CD4-positive, alpha-beta memory T cell (primary cell): ENCODE measurements at regions of chr5 and their contacts with region 1.

Region 1: GRCh38 chr5:14871210-14872069 is at the start of gene ANKH:
- DNase-seq: peak; percentile 77 to 89 (median 87)
- H3K4me3 ChIP-seq: peak within 1 kb of the TSS; percentile 74 to 76
- H3K4me3 Mint-ChIP-seq: peak within 1 kb of the TSS; percentile 94 to 99 (median 98)
- H3K27ac ChIP-seq: peak within 1 kb of the TSS; percentile 67
- H3K27ac Mint-ChIP-seq: peak within 1 kb of the TSS; percentile 96 to 98 (median 97)
- H3K4me1 ChIP-seq: peaks cover 22% of the 10 kb centered on the region
- H3K4me1 Mint-ChIP-seq: peaks cover 29 to 46% (median 33%) of the 10 kb centered on the region in 4 donors
- H3K27me3 ChIP-seq: no peaks in the 10 kb centered on the region
- H3K27me3 Mint-ChIP-seq: no peaks in the 10 kb centered on the region
- total RNA-seq, gene ANKH: 161 to 165 TPM

Region 2: DNA sequence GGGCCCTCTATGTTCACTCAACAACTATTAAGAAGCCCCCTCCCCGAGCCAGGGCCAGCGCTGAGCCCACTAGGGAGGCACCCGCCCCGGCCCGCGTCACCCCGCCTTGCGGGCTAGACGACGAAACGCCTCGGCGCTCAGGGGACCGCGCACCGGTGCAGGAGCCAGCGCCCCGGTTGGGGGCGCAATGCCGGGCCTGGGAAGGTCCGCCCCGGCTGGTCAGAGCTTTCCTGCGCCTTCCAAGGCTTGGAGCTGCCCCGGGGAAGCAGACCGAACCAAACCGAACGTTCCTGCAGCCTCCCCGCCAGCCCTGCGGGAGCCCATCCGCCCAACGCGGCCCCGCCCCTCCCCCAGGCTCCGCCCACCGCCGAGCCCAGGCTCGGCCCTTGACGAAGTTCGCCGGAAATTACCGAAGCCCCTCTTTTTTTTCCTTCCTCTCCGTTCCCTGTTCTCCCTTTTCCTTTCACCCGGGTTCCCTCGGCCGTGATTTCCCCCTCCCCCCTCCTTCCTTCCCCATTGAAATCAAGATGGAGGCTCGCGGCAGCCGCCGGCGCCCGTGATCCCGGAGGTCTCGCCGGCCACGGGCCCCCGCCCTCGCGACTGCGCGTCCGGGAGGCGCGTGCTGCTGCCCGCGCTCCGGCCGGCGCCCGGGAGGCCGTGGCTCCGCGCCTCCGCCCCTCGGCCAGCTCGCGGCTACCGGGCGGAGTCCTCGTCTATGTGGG is 728.5 kb before region 1 on chr5 and contains the start of gene TRIO:
- CTCF ChIA-PET with region 1: no interaction called
- POLR2A ChIA-PET with region 1: no interaction called
- intact Hi-C with region 1: loop called (anchors 5 kb)
- DNase-seq: peak; percentile 54 to 68 (median 62)
- H3K4me3 ChIP-seq: peak within 1 kb of the TSS; percentile 57 to 68
- H3K4me3 Mint-ChIP-seq: peak within 1 kb of the TSS; percentile 81 to 88 (median 85)
- H3K27ac ChIP-seq: no peak within 1 kb of the TSS
- H3K27ac Mint-ChIP-seq: peak within 1 kb of the TSS in 4 of 7 donors; percentile 42 to 78 (median 64)
- H3K4me1 ChIP-seq: peaks cover 11% of the 10 kb centered on the region
- H3K4me1 Mint-ChIP-seq: peaks cover 7 to 21% (median 11%) of the 10 kb centered on the region in 4 donors
- H3K27me3 ChIP-seq: peaks cover 11% of the 10 kb centered on the region
- H3K27me3 Mint-ChIP-seq: peaks cover 20 to 27% of the 10 kb centered on the region in 2 donors
- total RNA-seq, gene TRIO: 9.7 to 11.5 TPM

Region 3: DNA sequence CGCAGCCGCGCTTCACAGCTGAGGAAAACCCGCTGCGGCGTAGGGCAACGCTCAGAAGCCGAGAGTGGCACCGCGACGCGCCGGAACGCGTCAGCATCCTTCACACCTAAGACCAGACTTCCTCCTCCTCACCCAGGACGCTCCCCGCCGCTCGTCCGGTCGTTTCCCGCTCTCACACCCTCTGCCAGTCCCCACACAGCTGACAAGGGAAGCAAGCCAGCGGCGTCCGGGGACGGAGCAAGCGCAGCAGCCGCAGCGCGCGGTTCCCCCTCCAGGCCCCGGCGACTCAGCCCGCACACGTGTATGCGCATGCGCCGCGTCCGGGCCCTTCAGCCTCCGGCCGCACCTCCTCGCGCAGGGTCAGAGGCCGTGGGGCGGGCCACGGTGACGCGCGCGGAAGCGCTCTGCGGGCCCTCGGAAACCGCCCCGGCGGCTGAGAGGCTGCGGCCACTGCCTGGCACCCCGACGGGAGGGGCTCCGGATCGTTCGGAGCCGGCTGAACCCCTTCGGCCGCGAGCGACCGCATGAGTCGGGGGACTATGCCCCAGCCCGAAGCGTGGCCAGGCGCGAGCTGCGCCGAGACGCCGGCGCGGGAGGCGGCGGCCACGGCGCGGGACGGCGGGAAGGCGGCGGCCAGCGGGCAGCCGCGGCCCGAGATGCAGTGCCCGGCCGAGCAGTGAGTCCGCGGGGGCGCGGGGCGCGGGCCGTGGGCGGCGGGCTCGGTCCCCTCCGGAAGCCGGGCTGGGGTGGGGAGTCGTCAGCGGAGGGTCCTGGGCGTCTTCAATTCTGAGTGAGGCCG is 206.9 kb before region 1 on chr5 and contains the start of gene OTULIN:
- CTCF ChIA-PET with region 1: interaction called, 3 read pairs
- POLR2A ChIA-PET with region 1: interaction called, 6 read pairs
- intact Hi-C with region 1: loop called (anchors 5 kb)
- DNase-seq: peak; percentile 82 to 92 (median 84)
- H3K4me3 ChIP-seq: peak within 1 kb of the TSS; percentile 54 to 80
- H3K4me3 Mint-ChIP-seq: peak within 1 kb of the TSS; percentile 94 to 98 (median 96)
- H3K27ac ChIP-seq: peak within 1 kb of the TSS; percentile 81
- H3K27ac Mint-ChIP-seq: peak within 1 kb of the TSS; percentile 89 to 99 (median 96)
- H3K4me1 ChIP-seq: peaks cover 61% of the 10 kb centered on the region
- H3K4me1 Mint-ChIP-seq: peaks cover 44 to 76% (median 56%) of the 10 kb centered on the region in 4 donors
- H3K27me3 ChIP-seq: no peaks in the 10 kb centered on the region
- H3K27me3 Mint-ChIP-seq: no peaks in the 10 kb centered on the region
- total RNA-seq, gene OTULIN: 59.4 to 69.0 TPM

Region 4: DNA sequence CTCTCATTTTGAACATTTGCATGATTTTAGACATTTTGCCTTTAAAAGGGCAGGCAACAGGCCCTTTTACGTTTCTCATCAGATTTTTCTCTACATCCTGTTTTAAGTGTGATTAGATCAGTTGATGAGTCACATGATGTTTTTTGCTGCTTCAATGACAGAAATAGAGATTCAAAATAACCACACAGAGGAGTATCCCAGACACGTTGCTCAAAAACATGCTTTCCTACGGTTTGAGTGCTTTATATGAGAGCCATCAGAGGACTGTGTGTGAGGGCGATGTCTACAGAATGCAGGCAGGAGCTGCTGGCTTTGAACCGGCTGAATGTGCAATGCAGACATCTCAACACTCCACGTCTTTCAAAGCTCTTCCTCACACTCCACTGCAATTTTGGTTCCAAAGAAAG is 164.8 kb before region 1 on chr5:
- CTCF ChIA-PET with region 1: interaction called, 3 read pairs
- POLR2A ChIA-PET with region 1: interaction called, 6 read pairs
- intact Hi-C with region 1: loop called (anchors 5 kb)
- DNase-seq: peak; percentile 67 to 80 (median 73)
- H3K4me3 ChIP-seq: peak overlapping the region in 1 of 2 donors; percentile 26
- H3K4me3 Mint-ChIP-seq: peak overlapping the region; percentile 81 to 90 (median 82)
- H3K27ac ChIP-seq: peak overlapping the region; percentile 49
- H3K27ac Mint-ChIP-seq: peak overlapping the region; percentile 94 to 99 (median 99)
- H3K4me1 ChIP-seq: peaks cover 76% of the 10 kb centered on the region
- H3K4me1 Mint-ChIP-seq: peaks cover 66 to 91% (median 80%) of the 10 kb centered on the region in 4 donors
- H3K27me3 ChIP-seq: no peaks in the 10 kb centered on the region
- H3K27me3 Mint-ChIP-seq: no peaks in the 10 kb centered on the region

Region 5: GRCh38 chr5:14743601-14744295 is 127.7 kb before region 1 on chr5:
- CTCF ChIA-PET with region 1: no interaction called
- POLR2A ChIA-PET with region 1: no interaction called
- intact Hi-C with region 1: no loop called
- DNase-seq: no peak
- H3K4me3 ChIP-seq: no peak overlapping the region
- H3K4me3 Mint-ChIP-seq: no peak overlapping the region
- H3K27ac ChIP-seq: no peak overlapping the region
- H3K27ac Mint-ChIP-seq: peak overlapping the region in 5 of 7 donors; percentile 25 to 87 (median 72)
- H3K4me1 ChIP-seq: no peaks in the 10 kb centered on the region
- H3K4me1 Mint-ChIP-seq: peaks cover 0 to 11% (median 5%) of the 10 kb centered on the region in 4 donors
- H3K27me3 ChIP-seq: no peaks in the 10 kb centered on the region
- H3K27me3 Mint-ChIP-seq: no peaks in the 10 kb centered on the region

Region 6: DNA sequence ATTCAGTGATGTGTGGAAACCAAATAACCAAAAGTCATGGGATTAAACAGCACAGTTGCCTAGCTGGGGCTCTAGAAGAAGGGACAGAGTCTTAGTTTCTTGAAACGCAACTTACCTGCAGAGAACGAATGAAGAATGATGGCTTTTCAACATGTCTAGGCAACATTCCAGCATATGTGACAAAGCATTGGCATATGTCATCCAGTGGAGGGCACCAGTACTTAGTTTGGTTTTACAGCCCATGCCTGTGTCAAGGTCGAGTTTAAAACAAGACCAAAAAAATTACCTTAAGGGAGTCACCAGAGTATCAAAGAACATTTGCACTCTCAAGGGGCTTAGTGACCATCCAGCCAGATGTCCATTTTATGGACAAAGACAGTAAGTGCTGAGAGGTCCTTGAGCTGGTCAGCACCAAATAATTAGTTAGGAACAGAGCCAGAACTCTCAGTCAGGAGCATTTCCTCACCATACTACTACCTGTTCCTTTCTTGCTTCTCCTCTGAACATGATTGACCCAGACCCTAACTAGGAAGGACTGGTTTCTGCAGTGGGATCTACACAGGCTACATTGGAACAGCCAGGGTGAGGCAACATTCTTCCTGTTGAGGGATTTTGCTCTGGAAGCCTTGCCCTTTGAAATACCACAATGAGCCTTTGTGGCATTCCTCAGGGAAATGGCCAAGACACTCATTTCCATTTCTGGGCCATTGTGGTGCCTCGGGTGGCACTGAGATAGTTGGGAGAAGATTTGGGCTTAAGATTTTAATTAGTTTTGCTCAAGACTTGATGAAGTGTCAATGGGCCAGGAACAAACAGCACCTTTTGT is 75.6 kb after region 1 on chr5:
- CTCF ChIA-PET with region 1: interaction called, 6 read pairs
- POLR2A ChIA-PET with region 1: no interaction called
- intact Hi-C with region 1: loop called (anchors 2 kb)
- DNase-seq: peak in 4 of 5 donors; percentile 45 to 57 (median 50)
- H3K4me3 ChIP-seq: no peak overlapping the region
- H3K4me3 Mint-ChIP-seq: no peak overlapping the region
- H3K27ac ChIP-seq: no peak overlapping the region
- H3K27ac Mint-ChIP-seq: peak overlapping the region in 2 of 7 donors; percentile 2 to 54
- H3K4me1 ChIP-seq: no peaks in the 10 kb centered on the region
- H3K4me1 Mint-ChIP-seq: peaks cover 0 to 5% (median 2%) of the 10 kb centered on the region in 4 donors
- H3K27me3 ChIP-seq: no peaks in the 10 kb centered on the region
- H3K27me3 Mint-ChIP-seq: peaks cover 3% of the 10 kb centered on the region in 2 donors